Activated CD4-positive, alpha-beta T cell treated with anti-CD3 and anti-CD28 coated beads, Interleukin-2, amount 10 ng/mL, durations not matched to agents 24 days and 14 days (primary cell): ENCODE measurements at regions of chr12 and their contacts with region 1.

Region 1: DNA sequence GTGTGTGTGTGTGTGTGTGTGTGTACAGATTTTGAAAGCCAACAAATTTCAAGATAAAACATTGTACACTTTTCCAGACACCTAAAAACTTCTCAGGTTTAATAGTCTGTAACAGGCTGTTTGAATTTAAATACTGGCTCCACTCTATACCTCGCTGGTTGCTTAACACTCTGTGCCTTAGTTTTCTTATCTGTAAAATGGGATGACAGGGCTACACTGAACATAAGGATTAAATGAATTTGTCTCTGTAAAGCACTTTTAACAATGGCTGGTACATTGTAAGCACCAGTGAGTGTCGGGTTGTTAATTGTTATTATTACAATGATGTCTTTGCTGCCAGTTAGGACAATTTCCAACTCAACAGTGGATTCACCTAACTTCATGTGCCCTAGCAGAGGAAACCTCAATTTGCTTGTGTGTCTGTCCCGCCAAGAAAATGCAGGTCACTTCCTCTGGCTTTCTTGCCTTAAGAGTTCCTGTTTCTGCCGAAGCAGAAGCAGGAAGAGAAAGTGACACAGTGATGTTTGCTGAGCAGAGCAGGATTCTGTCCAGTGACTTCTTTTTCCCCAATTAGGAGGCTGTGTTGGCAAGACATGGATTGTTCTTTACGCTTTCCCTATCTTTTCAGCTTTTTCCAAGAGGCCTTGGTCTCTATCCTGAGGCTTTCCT is 154.0 kb upstream of the ATP2B1 start:
- DNase-seq: peak; percentile 86
- H3K4me3 Mint-ChIP-seq: peak overlapping the region; percentile 84
- H3K27ac Mint-ChIP-seq: peak overlapping the region; percentile 97
- H3K4me1 Mint-ChIP-seq: peaks cover 42% of the 10 kb centered on the region
- H3K27me3 Mint-ChIP-seq: no peaks in the 10 kb centered on the region

Region 2: DNA sequence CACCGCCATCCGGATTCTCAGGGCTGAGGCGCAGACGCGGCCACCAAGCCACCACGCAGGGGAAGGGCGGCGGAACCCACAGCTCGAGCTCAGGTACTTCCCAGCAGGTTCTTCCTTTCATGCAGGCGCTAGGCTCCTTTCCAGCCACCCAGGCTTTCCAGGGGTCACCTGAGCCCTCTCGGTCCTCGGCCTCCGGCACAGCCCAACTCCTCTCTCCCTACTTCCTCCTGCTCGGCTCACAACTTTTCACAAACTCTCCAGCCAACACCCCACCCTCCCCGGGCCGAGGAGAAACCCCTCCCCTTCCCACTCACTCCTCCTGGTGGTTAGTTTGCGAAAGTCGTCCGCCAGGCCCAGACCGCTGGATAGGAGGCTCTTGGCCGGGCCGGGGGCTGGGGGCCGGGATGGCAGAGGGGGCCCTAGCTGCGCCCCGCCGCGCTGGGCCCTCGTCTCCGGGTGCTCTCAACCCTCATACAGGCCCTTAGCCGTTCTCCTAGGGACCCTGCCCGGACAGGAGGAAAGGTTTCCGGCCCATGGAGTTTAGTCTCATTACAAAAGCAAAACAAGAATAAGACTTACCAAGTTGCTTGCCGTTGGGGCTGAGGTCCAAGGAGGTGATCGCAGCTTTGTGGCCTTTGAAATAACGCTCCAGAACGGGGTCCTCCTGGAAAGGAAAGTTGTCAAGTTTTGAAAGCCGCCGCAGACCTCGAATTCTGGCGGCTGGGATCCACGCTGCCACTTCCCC is 337.9 kb before region 1 on chr12 and contains the start of gene GALNT4:
- intact Hi-C with region 1: loop called (anchors 5 kb)
- DNase-seq: peak; percentile 94
- H3K4me3 Mint-ChIP-seq: peak within 1 kb of the TSS; percentile 98
- H3K27ac Mint-ChIP-seq: peak within 1 kb of the TSS; percentile 99
- H3K4me1 Mint-ChIP-seq: peaks cover 49% of the 10 kb centered on the region
- H3K27me3 Mint-ChIP-seq: no peaks in the 10 kb centered on the region
- total RNA-seq, gene GALNT4: 6.9 and 7.6 TPM in 2 replicates

Region 3: GRCh38 chr12:89597770-89598169 is 264.9 kb before region 1 on chr12:
- intact Hi-C with region 1: loop called (anchors 5 kb)
- DNase-seq: no peak
- H3K4me3 Mint-ChIP-seq: no peak overlapping the region
- H3K27ac Mint-ChIP-seq: peak overlapping the region; percentile 76
- H3K4me1 Mint-ChIP-seq: peaks cover 13% of the 10 kb centered on the region
- H3K27me3 Mint-ChIP-seq: peaks cover 10% of the 10 kb centered on the region

Region 4: GRCh38 chr12:89882050-89882449 is 19.4 kb after region 1 on chr12:
- intact Hi-C with region 1: loop called (anchors 1 kb)
- DNase-seq: peak; percentile 71
- H3K4me3 Mint-ChIP-seq: peak overlapping the region; percentile 20
- H3K27ac Mint-ChIP-seq: peak overlapping the region; percentile 78
- H3K4me1 Mint-ChIP-seq: peaks cover 29% of the 10 kb centered on the region
- H3K27me3 Mint-ChIP-seq: no peaks in the 10 kb centered on the region

Region 5: GRCh38 chr12:89949457-89950195 is 87.0 kb after region 1 on chr12:
- intact Hi-C with region 1: loop called (anchors 1 kb)
- DNase-seq: peak; percentile 86
- H3K4me3 Mint-ChIP-seq: peak overlapping the region; percentile 1
- H3K27ac Mint-ChIP-seq: peak overlapping the region; percentile 4
- H3K4me1 Mint-ChIP-seq: peaks cover 19% of the 10 kb centered on the region
- H3K27me3 Mint-ChIP-seq: peaks cover 2% of the 10 kb centered on the region

Region 6: GRCh38 chr12:90091021-90091651 is 228.5 kb after region 1 on chr12:
- intact Hi-C with region 1: loop called (anchors 5 kb)
- DNase-seq: peak; percentile 67
- H3K4me3 Mint-ChIP-seq: no peak overlapping the region
- H3K27ac Mint-ChIP-seq: peak overlapping the region; percentile 12
- H3K4me1 Mint-ChIP-seq: peaks cover 11% of the 10 kb centered on the region
- H3K27me3 Mint-ChIP-seq: no peaks in the 10 kb centered on the region